ENCODE measurements at regions of chr3 and their contacts with region 1.

Region 1: DNA sequence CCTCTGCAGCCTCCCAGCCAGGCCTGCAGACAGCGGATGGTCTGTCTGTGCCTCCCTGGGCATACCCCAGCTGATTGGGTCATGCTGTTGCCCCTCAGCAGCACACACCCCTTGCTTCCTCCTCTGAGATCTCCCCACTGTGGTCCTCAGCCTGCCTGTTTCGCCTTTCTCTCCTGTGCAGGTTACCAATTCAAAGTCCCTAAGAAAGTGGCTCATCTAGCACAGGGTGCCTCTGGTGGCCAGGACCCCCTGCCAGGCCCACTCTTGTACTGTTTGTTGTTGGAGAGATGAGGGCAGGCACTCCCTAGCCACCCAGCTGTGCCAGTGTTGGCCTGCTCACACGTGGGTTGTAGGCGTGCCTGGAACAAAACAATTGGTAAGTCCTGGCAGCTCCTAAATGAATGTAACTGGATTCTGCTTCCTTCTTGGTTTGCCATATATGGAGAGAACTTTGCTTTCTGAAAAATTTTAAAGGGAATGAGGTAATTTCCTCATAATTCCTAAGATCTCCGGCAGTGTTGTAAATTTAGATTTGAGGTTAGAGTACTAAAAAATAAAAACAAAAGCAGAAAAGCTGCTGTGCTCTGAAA is 213.2 kb upstream of the IL12A start:
- DNase-seq: peak; percentile 80
- H3K4me3 Mint-ChIP-seq: no peak overlapping the region
- H3K27ac Mint-ChIP-seq: peak overlapping the region; percentile 84
- H3K4me1 Mint-ChIP-seq: peaks cover 33% of the 10 kb centered on the region
- H3K27me3 Mint-ChIP-seq: no peaks in the 10 kb centered on the region
- CTCF ChIP-seq: no peak

Region 2: DNA sequence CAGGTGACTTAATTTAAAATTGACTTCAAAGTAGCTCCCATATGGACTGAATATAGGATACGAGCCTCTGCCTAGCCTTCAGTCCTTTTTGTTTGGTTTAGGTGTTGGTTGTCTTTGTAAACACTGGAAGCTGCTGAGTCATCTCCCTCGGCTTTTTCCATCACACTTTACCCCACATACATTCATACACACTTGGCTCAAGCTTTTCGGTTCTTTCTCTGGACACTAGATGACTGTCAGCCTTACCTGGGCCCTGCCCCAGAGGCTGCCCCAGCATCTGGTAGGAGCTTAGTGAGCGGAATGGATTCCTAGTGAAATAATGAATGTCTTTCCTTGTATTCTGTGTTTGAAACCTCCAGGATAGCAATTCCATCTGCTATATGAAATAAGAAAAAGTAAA is 11.7 kb after region 1 on chr3:
- CTCF ChIA-PET with region 1: interaction called, 18 read pairs
- POLR2A ChIA-PET with region 1: interaction called, 85 read pairs
- intact Hi-C with region 1: no loop called
- DNase-seq: peak; percentile 94
- H3K4me3 Mint-ChIP-seq: peak overlapping the region; percentile 47
- H3K27ac Mint-ChIP-seq: peak overlapping the region; percentile 89
- H3K4me1 Mint-ChIP-seq: peaks cover 55% of the 10 kb centered on the region
- H3K27me3 Mint-ChIP-seq: no peaks in the 10 kb centered on the region
- CTCF ChIP-seq: no peak

Region 3: DNA sequence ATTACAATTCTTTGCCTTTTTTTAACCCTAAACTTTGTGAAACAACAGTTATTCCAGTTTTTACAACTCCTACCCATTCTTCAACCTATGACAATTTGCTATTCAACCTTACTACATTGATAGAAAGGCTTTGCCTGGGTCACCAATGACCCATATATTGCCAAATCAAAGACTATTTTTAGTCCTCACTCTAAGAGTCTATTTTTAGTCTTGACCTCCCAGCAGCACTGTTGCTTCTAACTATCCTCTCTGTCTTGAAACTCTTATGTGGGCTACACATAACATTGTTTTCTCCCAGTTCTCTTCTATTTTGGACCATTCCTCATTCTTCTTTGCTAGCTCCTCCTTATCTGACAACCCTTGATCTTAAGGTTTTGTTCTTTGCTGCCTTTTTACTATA is 521.1 kb after region 1 on chr3:
- CTCF ChIA-PET with region 1: no interaction called
- POLR2A ChIA-PET with region 1: no interaction called
- intact Hi-C with region 1: no loop called
- DNase-seq: no peak
- H3K4me3 Mint-ChIP-seq: no peak overlapping the region
- H3K27ac Mint-ChIP-seq: no peak overlapping the region
- H3K4me1 Mint-ChIP-seq: no peaks in the 10 kb centered on the region
- H3K27me3 Mint-ChIP-seq: no peaks in the 10 kb centered on the region
- CTCF ChIP-seq: no peak

Measured in MCF 10A (cell line).